Right ventricle myocardium inferior (tissue), 1 donor: ENCODE measurements at regions of chr7 and their contacts with region 1.

Region 1: DNA sequence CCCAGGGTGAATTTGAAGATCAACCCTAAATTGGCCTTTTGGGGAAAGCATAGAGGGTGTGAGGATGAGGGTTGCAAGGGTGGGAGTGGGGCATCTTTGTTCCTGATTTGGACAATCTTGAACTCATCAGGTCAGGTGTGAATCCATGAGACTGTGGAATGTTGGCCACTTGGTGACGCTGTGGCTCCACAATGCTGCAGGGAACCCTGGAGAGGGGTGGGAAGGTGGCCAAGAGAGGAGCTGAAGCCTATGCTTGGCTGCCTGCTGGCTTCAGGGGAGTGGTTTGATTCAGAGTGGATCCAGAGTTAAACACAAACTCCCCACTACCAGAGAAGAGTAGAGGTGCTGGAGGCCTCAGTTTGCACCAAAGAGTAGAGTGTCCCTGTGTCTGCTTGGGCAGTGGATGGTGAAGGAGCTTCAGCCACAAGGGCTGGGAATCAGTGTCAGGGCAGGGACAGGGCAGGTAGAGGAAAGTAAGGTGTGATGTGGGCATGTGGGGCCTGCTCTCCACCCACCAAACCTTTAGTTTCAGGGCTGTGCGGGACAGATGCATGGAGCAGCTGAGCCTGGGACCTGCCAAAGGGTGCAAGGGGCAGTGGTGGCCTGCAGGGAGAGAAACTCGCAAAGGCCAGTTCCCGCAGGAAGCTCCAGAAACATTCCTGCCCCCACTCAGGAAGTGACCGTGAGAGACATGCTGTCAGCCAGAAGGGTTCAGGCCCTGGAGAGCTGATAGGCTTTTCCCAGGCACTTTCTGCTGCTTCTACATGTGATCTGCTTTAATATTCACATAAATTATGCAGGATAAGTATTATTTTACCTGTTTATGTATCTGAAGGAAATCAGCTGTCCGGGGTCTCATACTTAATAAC is 81.0 kb upstream of the PRSS58 start:
- DNase-seq: no peak
- ATAC-seq: no peak

Region 2: DNA sequence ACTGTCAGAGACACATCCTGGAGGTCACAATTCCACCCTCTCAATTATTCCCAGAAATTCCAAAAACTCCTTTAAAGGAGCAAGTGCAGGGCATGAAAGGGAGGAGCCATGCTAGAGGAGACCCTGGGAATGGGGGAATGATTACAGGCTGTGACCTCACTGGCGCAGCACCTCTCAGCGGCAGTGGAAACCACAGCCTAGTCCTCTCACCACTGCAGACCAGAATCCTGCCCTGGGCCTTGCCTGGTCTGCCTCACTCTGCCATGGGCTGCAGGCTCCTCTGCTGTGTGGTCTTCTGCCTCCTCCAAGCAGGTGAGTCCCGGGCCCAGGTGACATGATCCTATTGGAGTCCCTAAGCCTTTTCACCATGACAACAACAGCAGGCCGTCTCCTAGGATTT is 30.5 kb before region 1 on chr7:
- intact Hi-C with region 1: loop called (anchors 1 kb)
- DNase-seq: no peak
- ATAC-seq: no peak